ENCODE measurements at regions of chr1 and their contacts with region 1.

Region 1: GRCh38 chr1:48109390-48110013 is 112.3 kb upstream of the TRABD2B start:
- DNase-seq: no peak
- ATAC-seq: no peak

Region 2: GRCh38 chr1:48026275-48026674 is 83.2 kb before region 1 on chr1:
- intact Hi-C with region 1: no loop called
- DNase-seq: no peak
- ATAC-seq: no peak

Region 3: DNA sequence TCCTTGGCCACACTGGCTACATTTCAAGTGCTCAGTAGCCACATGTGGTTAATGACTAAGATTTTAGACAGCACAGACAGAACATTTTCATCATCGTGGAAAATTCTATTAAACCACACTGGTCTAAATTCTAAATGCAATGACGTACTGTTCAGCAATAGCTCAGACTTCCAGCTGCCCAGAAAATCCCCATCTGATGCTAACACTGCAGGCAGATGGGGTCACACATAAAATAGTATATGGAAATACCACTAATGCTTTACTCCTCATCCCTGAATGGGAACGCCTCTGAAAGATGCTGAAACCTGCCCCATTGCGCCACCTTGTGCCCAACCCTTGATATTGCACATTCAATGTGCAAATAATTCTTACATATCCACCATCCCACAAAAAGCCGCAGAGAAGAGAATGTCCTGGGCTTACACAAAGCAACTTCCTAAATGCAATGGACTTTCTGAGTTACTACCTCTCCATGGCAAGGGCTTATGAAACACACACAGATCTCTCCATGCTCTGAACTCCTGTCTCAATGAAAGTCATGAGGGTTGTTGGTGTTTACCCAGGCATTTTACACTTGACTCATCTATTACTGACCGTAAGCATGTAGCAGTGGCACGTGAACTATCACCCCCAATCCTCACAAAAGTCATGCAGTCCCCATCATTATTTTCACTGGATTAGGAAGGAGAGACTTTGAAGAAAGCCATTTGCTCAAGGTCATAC is 92.7 kb after region 1 on chr1:
- intact Hi-C with region 1: loop called (anchors 1 kb)
- DNase-seq: peak; percentile 84
- ATAC-seq: peak; percentile 62

Region 4: DNA sequence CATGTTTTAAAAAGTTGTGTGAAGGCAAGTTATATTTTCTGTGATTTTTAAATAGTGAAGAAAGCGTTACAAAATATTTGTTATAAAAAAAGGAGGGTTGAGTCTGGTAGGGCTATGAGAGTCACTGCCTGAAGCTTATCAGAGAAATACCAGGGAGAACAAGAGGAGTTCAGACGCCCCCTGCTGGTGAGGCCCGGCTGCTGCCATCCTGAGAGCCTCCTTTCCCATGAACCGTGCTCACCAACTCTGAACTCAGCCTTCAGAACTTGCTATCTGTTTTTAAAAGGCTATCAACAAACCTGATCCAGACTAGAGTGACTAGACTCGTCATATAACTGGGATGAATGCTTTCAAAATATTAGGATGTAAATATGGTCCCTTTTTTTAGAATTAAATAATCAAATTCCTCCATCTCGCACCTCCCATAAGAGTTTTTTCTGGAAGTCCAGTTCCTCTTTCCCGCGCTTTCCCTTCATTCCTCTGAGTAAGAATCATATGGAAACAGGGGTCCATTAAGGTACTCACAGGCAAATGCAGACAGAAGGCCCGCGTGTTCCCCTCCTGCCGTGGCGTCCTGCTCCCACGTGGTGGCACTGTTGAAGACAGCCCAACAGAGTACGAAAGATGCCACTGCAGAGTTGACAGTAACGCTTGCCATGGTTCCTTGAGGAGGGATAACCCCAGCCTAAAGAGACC is 388.7 kb after region 1 on chr1:
- intact Hi-C with region 1: loop called (anchors 5 kb)
- DNase-seq: peak; percentile 90
- ATAC-seq: peak; percentile 91

Measured in Right ventricle myocardium inferior (tissue), 1 donor.